GM12878 (cell line): ENCODE measurements at regions of chr15 and their contacts with region 1.

Region 1: GRCh38 chr15:23039151-23039916 is at the start of gene TUBGCP5:
- DNase-seq: peak; percentile 87
- ATAC-seq: peak; percentile 94
- H3K4me3 ChIP-seq: peak within 1 kb of the TSS; percentile 75
- H3K27ac ChIP-seq: peak within 1 kb of the TSS; percentile 74
- H3K4me1 ChIP-seq: peaks cover 7% of the 10 kb centered on the region
- H3K27me3 ChIP-seq: no peaks in the 10 kb centered on the region
- CTCF ChIP-seq: peak; percentile 8 to 41 (median 30); a peak in 2 of 6 replicates
- EP300 ChIP-seq: no peak
- POLR2A ChIP-seq: peak; percentile 100
- RAD21 ChIP-seq: no peak
- polyA plus RNA-seq, gene TUBGCP5: 6.4 to 7.6 TPM

Region 2: DNA sequence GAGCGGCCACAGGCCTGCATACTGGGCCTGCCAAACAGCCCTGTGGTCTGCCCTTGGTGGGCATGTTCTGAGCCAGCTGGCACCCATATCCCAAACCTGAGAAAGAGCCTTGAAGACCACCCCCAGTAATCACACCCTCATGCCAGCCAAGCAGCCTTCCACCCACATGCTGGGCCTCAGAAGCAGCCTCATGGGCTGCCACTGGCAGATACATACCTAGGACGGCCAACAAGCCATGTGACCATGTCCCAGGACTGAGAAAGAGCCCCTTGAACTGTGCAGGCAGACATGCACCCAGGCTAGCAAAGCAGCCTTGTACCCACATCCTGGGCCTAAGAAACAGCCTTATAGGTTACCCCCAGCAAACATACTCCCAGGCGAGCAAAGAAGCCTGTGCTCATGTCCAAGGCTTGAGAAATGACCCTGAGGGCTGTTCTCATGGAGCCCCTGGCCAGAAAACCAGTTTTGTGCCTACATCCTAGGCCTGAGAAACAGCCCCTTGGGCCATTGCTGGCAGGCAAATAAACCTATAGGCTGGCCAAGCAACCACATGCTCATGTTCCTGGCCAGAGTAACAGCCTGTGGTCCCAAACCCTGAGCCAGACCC is 24.8 kb before region 1 on chr15:
- CTCF ChIA-PET with region 1: interaction called, 11 read pairs
- POLR2A ChIA-PET with region 1: no interaction called
- RAD21 ChIA-PET with region 1: no interaction called
- SMC1A ChIA-PET with region 1: no interaction called
- in situ Hi-C with region 1: no loop called
- intact Hi-C with region 1: no loop called
- DNase-seq: no peak
- ATAC-seq: no peak
- H3K4me3 ChIP-seq: no peak overlapping the region
- H3K27ac ChIP-seq: no peak overlapping the region
- H3K4me1 ChIP-seq: no peaks in the 10 kb centered on the region
- H3K27me3 ChIP-seq: no peaks in the 10 kb centered on the region
- CTCF ChIP-seq: no peak
- EP300 ChIP-seq: no peak
- POLR2A ChIP-seq: no peak
- RAD21 ChIP-seq: no peak

Region 3: GRCh38 chr15:23022156-23022555 is 17.2 kb before region 1 on chr15:
- CTCF ChIA-PET with region 1: interaction called, 21 read pairs
- POLR2A ChIA-PET with region 1: no interaction called
- RAD21 ChIA-PET with region 1: no interaction called
- SMC1A ChIA-PET with region 1: interaction called, 5 read pairs
- in situ Hi-C with region 1: no loop called
- intact Hi-C with region 1: no loop called
- DNase-seq: no peak
- ATAC-seq: no peak
- H3K4me3 ChIP-seq: no peak overlapping the region
- H3K27ac ChIP-seq: no peak overlapping the region
- H3K4me1 ChIP-seq: no peaks in the 10 kb centered on the region
- H3K27me3 ChIP-seq: no peaks in the 10 kb centered on the region
- CTCF ChIP-seq: no peak
- EP300 ChIP-seq: no peak
- POLR2A ChIP-seq: no peak
- RAD21 ChIP-seq: no peak

Region 4: DNA sequence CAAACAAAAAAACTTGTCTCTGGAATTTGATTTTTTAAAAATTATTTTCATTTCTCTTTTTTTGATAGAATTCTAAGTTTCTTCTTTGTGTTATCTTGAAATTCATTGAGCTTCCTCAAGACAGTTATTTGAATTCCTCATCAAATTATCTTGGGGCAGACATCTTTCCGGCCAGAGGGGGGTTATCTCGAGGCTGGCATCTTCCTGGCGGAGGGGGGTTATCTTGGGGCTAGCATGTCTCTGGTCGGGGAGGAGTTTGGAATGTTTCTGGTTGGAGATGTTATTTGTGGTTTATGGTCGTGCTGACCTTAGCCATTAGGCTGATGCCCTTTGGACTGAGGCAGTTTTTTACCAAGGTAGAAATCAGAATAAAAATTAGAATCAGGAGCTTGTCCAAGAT is 16.0 kb after region 1 on chr15:
- CTCF ChIA-PET with region 1: interaction called, 16 read pairs
- POLR2A ChIA-PET with region 1: no interaction called
- RAD21 ChIA-PET with region 1: interaction called, 3 read pairs
- SMC1A ChIA-PET with region 1: interaction called, 4 read pairs
- in situ Hi-C with region 1: no loop called
- intact Hi-C with region 1: no loop called
- DNase-seq: no peak
- ATAC-seq: no peak
- H3K4me3 ChIP-seq: no peak overlapping the region
- H3K27ac ChIP-seq: no peak overlapping the region
- H3K4me1 ChIP-seq: no peaks in the 10 kb centered on the region
- H3K27me3 ChIP-seq: no peaks in the 10 kb centered on the region
- CTCF ChIP-seq: no peak
- EP300 ChIP-seq: no peak
- POLR2A ChIP-seq: no peak
- RAD21 ChIP-seq: no peak

Region 5: DNA sequence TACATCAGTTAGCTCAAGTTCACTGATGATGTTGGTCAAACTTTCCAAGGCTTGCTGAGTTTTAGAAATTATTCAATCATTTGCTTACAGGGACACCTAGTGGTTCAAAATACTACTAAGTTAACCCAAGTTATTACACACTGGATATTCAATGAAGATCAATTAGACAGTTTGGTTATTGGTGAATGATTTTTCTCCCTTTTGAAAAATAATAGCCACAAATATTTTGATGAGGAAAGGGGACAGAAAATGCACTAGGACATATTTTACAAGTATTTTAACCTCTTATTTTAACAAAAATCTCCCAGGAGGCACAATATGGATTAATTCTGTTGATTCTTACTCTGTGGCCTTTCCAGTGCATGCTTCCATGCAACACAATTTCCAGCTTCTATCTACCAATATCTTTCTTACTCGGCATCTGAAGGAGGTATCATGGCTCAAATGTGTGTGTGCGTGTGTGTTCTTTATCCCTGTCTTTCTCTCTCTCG is 427.8 kb after region 1 on chr15:
- CTCF ChIA-PET with region 1: interaction called, 4 read pairs
- POLR2A ChIA-PET with region 1: no interaction called
- RAD21 ChIA-PET with region 1: interaction called, 3 read pairs
- SMC1A ChIA-PET with region 1: no interaction called
- in situ Hi-C with region 1: no loop called
- intact Hi-C with region 1: loop called (anchors 10 kb)
- DNase-seq: no peak
- ATAC-seq: peak; percentile 53; the same call in 2 of the 3 replicates
- H3K4me3 ChIP-seq: no peak overlapping the region
- H3K27ac ChIP-seq: no peak overlapping the region
- H3K4me1 ChIP-seq: no peaks in the 10 kb centered on the region
- H3K27me3 ChIP-seq: no peaks in the 10 kb centered on the region
- CTCF ChIP-seq: peak in 2 of 3 experiments; percentile 17 to 43; a peak in 3 of 6 replicates
- EP300 ChIP-seq: no peak
- POLR2A ChIP-seq: no peak
- RAD21 ChIP-seq: peak; percentile 36; the same call in 1 of the 2 replicates